Activated T-helper 1 cell treated with anti-CD3 and anti-CD28 coated beads, Interleukin-12 subunit alpha, Interleukin-12 subunit beta, Interleukin-2, Interleukin-4 antibody, amounts not matched to agents 30 ng/mL and 10 ng/mL and 1 ng/mL, durations not matched to agents 14 hours and 24 hours and 36 hours (primary cell): ENCODE measurements at regions of chr16 and their contacts with region 1.

Region 1: DNA sequence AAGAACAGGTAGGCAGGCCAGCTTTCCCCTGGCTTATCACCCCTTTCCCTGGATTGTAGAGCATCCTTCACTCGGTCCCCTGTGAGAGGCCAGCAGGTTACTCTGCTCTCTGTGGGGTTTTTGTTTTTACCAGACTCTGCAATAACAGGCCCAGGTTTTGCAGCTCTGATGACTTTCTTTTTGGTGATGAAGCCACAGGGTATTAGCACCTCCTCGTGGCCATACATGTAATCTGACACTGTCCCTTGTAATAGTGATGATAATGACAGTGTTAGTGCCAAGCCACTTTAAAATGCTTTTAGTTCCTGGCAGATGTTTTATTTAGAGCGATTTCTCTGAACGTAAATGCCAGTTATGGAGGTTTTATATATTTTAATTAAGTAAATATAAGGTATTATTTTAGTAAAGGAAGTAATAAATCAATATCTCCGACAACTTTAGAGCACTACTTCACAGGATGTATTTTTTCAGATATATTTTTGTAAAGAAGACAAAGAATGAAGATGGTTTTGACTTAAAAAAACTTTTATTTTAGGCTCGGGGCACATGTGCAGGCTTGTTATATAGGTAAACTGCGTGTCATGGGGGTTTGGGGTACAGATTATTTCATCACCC is 38.0 kb upstream of the CPHXL start:
- DNase-seq: peak; percentile 35
- H3K4me3 Mint-ChIP-seq: no peak overlapping the region
- H3K27ac Mint-ChIP-seq: no peak overlapping the region
- H3K4me1 Mint-ChIP-seq: no peaks in the 10 kb centered on the region
- H3K27me3 Mint-ChIP-seq: peaks cover 12% of the 10 kb centered on the region

Region 2: GRCh38 chr16:75234856-75235696 is 529.2 kb before region 1 on chr16:
- intact Hi-C with region 1: loop called (anchors 1 kb)
- DNase-seq: no peak
- H3K4me3 Mint-ChIP-seq: no peak overlapping the region
- H3K27ac Mint-ChIP-seq: no peak overlapping the region
- H3K4me1 Mint-ChIP-seq: no peaks in the 10 kb centered on the region
- H3K27me3 Mint-ChIP-seq: peaks cover 13% of the 10 kb centered on the region

Region 3: DNA sequence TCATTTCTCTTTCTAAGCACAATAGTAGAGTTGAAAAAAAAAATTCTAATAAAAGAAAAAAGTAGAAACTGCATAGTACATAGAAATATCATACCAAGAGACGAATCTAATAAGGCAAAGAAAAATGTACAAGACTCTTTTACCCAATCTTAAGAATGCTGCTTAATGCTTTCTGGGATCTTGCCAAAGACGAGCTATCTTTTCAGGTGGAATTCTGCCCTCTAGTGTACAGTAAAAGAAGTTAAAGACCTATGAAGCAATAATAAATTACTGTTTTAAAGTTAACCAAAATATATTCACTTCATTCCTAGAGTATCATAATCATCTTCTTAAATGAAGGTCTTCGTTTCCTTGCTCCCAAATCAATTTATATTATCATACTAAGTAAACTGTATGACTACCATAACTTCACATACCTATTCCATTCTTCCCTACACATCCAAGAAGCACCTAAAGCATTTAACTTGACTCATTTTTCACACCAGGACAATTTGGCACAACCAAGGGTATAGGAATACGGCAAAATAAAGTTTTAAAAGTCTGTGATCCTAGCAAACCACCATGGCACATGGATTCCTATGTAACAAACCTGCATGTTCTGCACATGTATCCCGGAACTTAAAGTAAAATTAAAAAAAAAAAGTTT is 378.6 kb before region 1 on chr16:
- intact Hi-C with region 1: loop called (anchors 5 kb)
- DNase-seq: no peak
- H3K4me3 Mint-ChIP-seq: no peak overlapping the region
- H3K27ac Mint-ChIP-seq: no peak overlapping the region
- H3K4me1 Mint-ChIP-seq: peaks cover 4% of the 10 kb centered on the region
- H3K27me3 Mint-ChIP-seq: peaks cover 14% of the 10 kb centered on the region

Region 4: DNA sequence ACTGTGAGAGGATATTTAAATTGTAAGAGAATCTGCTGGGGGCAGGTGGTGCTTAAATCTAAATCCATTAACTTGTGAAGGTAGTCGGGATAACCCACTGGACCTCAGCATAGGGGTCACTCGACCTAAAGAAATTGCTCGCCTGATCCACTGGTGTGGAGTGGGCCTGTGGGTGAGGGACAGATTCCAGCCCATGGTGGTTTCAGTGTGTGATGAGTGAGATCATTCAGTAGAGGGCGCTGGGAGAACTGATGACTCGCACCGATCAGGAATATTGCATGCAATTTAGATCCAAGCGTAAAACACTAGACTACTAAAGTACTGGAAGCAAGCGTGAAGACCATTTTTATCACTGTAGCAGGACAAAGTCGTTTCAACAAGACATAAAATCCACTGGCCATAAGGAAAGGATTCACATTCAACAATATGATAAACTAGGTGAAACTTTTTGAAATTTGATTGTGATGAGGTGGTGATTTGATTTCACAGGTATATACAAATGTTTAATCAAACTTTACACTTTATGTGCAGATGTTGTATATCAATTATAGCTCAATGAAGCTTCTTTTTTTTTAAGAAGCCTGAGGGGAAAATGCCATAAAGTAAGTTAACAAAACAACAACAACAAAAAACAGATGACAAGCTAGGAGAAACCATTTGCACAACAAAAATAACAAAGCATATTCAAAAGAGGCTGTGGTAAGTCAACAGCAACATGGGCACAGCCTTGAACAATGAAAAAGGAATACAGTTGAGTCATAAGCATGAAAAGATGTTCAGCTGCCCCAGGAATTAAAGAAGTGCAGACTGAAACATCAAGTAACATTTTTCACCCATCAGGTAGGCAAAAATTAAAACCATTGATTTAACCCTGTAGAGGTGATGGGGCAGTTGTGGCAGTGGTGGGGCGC is 292.3 kb before region 1 on chr16:
- intact Hi-C with region 1: loop called (anchors 1 kb)
- DNase-seq: no peak
- H3K4me3 Mint-ChIP-seq: no peak overlapping the region
- H3K27ac Mint-ChIP-seq: no peak overlapping the region
- H3K4me1 Mint-ChIP-seq: no peaks in the 10 kb centered on the region
- H3K27me3 Mint-ChIP-seq: peaks cover 5% of the 10 kb centered on the region

Region 5: DNA sequence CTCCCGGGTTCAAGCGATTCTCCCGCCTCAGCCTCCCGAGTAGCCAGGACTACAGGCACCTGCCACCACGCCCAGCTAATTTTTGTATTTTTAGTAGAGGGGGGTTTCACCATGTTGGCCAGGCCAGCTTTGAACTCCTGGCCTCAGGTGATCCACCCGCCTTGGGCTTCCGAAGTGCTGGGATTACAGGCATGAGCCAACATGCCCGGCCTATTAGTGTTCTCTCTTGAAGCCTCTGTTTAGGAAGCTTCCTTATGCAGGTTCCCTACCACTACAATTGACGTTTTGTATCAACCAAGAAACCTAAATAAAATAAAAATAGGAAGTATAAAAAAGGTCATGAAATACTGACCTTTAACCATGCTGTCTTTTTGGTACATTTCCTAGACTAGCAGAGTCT is 244.4 kb before region 1 on chr16:
- intact Hi-C with region 1: loop called (anchors 2 kb)
- DNase-seq: no peak
- H3K4me3 Mint-ChIP-seq: no peak overlapping the region
- H3K27ac Mint-ChIP-seq: no peak overlapping the region
- H3K4me1 Mint-ChIP-seq: peaks cover 5% of the 10 kb centered on the region
- H3K27me3 Mint-ChIP-seq: peaks cover 5% of the 10 kb centered on the region

Region 6: GRCh38 chr16:75754141-75754540 is 10.1 kb before region 1 on chr16:
- intact Hi-C with region 1: no loop called
- DNase-seq: no peak
- H3K4me3 Mint-ChIP-seq: no peak overlapping the region
- H3K27ac Mint-ChIP-seq: no peak overlapping the region
- H3K4me1 Mint-ChIP-seq: no peaks in the 10 kb centered on the region
- H3K27me3 Mint-ChIP-seq: peaks cover 6% of the 10 kb centered on the region